Astrocyte of the cerebellum (primary cell): ENCODE measurements at regions of chr6 and their contacts with region 1.

Region 1: GRCh38 chr6:27893059-27893835 is 18.9 kb downstream of the OR2B2 start:
- DNase-seq: peak; percentile 94
- H3K4me3 ChIP-seq: peak overlapping the region; percentile 79
- CTCF ChIP-seq: no peak

Region 2: GRCh38 chr6:27157459-27158315 is 735.6 kb before region 1 on chr6:
- in situ Hi-C with region 1: loop called (anchors 5 kb)
- DNase-seq: no peak
- H3K4me3 ChIP-seq: peak overlapping the region; percentile 46
- CTCF ChIP-seq: peak; percentile 45

Region 3: GRCh38 chr6:27814660-27815424 is 78.4 kb before region 1 on chr6:
- in situ Hi-C with region 1: loop called (anchors 5 kb)
- DNase-seq: peak; percentile 96
- H3K4me3 ChIP-seq: peak overlapping the region; percentile 45
- CTCF ChIP-seq: no peak

Region 4: DNA sequence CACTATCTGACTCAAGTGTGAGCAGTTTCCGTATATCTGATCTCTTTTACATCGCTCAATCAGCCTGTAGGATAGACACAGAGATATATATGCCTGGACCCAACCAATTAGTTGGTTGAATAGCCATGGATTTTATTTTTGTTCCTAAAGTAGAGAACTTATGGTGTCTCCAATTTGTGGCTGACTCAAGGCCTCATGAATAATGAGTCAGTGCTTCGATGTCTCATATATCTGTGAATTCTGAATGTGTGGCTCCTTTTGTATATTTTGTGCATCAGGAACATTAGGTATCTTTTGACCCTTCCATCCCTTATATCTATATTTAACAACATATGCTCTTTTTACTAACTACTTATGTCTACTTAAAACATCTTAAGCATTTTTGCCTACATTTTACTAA is 45.5 kb before region 1 on chr6:
- in situ Hi-C with region 1: no loop called
- DNase-seq: no peak
- H3K4me3 ChIP-seq: no peak overlapping the region
- CTCF ChIP-seq: no peak

Region 5: GRCh38 chr6:27966044-27966443 is 72.8 kb after region 1 on chr6:
- in situ Hi-C with region 1: no loop called
- DNase-seq: no peak
- H3K4me3 ChIP-seq: no peak overlapping the region
- CTCF ChIP-seq: no peak